ENCODE measurements at regions of chr17 and their contacts with region 1.

Region 1: DNA sequence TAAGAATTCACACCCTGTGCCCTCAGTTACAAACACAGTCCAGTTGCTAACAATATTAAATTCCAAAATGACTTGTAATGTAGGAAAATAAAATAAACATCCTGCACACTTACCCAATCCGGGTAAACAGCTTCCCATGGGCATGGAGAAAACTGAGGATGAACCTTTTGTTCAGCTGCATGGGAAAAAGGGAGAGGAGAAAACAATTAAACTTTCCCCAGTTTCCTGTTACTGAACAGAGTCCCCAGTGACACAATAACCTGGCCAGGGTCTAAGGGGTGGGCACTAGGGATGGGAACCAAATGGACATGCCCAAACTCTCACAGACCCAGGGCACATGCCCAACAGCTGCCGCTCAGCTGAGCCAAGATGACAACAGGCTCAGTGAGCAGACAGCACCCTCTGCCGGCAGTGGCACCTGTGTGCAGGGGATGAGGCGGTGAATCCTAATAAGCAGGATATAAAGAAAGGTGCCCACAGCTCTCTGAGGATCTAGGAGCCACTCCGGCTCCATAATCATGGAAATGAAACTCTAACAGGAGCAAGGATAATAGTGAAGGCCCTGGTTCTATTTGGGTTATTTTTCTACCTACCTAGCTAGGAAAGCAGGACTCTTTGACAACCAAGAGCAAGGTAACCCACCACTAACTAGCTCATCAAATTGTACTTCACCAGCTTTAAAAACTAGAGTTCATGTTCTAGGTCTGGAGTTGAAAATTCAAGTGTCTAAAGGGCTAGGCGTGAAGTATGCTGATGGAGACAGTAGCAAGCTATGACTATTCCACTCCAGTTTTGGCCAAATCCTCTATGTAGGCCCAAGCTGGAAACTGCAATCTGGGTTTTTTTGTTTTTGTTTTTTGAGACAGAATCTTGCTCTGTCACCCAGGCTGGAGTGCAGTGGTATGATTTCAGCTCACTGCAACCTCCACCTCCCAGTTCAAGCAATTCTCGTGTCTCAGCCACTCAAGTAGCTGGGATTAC is 58.8 kb downstream of the SMG6 start:
- ATAC-seq: peak; percentile 82 to 100 (median 90)
- H3K4me3 ChIP-seq: no peak overlapping the region
- H3K27ac ChIP-seq: no peak overlapping the region
- H3K4me1 ChIP-seq: no peaks in the 10 kb centered on the region

Region 2: GRCh38 chr17:1939981-1940809 is 304.6 kb before region 1 on chr17:
- in situ Hi-C with region 1: no loop called
- ATAC-seq: peak in 7 of 8 experiments; percentile 13 to 50 (median 28)
- H3K4me3 ChIP-seq: no peak overlapping the region
- H3K27ac ChIP-seq: peak overlapping the region in 1 of 2 donors; percentile 61
- H3K4me1 ChIP-seq: peaks cover 31% of the 10 kb centered on the region in 2 donors

Region 3: DNA sequence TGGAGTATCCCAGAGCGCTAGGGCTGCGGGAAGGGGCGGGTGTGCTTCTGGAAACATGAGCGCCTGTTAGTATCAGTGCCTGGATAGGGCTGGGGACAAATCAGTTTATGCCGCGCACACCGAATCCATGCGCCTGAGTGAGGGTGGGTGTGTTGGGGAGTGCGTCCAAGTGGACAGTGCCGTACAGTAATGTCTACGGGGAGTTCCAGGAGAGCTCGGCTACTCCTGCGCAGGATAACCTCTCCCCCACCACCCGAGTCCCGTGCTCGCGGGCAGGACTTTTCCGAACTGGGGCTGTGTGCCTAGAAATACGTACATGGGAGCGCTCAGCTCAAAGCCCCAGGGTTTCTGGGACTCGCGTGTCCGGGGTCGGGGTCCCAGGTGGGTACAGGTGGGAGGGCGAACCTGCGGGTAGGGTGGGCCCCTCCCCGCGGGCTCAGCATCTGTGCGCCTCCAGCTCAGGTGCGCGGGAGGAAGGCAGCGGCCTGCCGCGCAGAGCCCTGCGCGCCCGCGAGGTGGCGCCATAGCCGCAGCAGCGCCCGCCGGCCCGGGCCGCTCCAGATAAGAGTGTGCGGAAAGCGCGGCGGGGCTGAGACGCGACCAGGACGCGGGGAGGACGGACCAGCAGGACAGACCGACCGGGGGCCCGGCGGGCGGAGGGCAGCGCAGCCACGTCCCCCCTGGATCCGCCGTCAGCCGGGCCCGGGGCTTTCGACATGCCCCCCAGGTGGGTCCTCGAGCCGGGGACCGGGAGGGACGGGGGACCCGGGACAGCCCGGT is 190.1 kb before region 1 on chr17 and contains the start of gene HIC1:
- in situ Hi-C with region 1: loop called in 5 of 9 experiments (anchors 10 to 25 kb)
- ATAC-seq: peak; percentile 23 to 58 (median 32)
- H3K4me3 ChIP-seq: peak within 1 kb of the TSS; percentile 28 to 42 (median 32)
- H3K27ac ChIP-seq: no peak within 1 kb of the TSS
- H3K4me1 ChIP-seq: peaks cover 0 to 7% of the 10 kb centered on the region in 2 donors
- total RNA-seq, gene HIC1: 0.71 to 24.0 (median 6.7) TPM

Region 4: DNA sequence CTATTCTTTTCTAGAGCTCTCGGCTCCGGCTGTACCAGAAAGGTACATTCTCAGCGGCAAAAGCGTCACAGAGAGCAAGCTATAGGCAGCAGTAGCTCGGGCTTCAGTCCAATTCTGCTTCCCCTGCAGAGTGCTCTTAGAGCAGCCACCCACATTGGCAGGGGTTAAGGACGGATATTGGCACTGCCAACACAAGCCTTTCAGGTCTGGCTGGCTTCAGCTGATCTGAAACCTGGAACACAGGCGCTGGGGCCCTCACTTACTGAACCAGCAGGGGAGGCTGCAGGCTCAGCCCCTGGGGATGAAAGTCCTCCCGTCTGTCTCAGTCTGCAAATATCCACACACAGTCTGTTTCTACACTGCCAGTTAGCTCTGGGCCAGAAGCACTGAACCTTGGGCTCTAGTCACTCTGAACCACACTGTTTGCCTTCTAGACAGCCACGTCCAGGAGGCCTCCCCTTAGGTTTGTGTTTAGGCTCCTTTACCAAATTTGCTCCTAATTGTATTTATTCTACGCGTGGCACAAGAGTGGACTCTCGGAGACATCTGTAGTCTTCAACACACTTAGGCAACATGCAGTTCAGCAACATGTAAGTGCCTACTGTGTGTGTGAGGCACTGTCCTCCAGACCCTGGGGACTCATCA is 149.8 kb before region 1 on chr17:
- in situ Hi-C with region 1: loop called in 1 of 9 experiments (anchors 25 kb)
- ATAC-seq: peak in 4 of 8 experiments; percentile 17 to 80 (median 38)
- H3K4me3 ChIP-seq: no peak overlapping the region
- H3K27ac ChIP-seq: no peak overlapping the region
- H3K4me1 ChIP-seq: no peaks in the 10 kb centered on the region

Measured in motor neuron (in vitro differentiated cells).